ENCODE measurements at regions of chr4 and their contacts with region 1.

Region 1: DNA sequence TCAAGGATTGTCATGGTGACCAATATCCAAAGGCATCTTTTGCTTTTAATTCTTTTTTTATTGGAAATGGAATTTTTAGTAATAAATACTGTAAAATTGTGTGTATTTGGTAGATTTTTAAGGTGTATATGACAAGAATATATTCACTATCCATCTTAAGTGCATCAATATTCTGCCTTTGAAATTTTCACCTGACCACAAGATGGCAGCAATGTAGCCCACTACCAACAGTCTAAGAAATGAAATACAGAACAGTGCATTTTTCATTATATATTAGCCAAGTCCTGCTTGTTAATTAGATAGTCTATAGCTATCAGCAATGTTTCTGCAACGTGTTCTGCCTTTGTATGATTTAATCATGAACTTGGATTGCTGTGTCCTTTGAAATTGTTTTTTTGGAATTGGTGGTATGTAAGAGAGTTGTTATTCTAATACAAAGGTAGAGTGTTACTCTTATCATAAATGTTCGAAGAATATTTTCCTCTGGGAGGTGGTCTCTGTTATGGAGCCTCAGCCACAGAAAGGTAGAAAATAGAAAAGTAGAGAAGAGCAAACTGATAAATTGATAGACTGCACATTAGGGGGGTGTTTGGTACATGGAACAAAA is 38.2 kb downstream of the HPGDS start:
- DNase-seq: no peak
- H3K4me3 ChIP-seq: no peak overlapping the region
- CTCF ChIP-seq: peak; percentile 52

Region 2: DNA sequence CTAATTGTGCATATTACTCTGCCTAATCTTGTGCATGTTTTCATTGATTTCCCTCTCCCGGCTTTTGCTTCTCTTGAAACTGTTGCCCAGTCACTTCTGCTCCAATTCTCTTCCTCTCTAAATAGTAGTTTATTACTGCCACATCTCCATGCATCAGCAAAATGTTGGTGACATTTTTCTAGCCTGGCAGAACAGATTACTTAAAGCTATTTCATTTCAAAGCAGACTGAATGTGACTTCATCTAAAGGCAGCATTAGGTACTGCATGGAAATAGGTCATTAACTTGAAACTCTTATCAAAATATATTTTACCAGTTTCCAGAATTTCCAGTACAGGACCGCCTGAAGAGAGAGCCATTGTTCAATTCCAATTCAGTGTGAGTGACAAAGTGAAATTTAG is 14.2 kb before region 1 on chr4:
- CTCF ChIA-PET with region 1: interaction called, 10 read pairs
- POLR2A ChIA-PET with region 1: no interaction called
- DNase-seq: no peak
- H3K4me3 ChIP-seq: no peak overlapping the region
- CTCF ChIP-seq: no peak

Region 3: GRCh38 chr4:94390804-94391410 is 86.4 kb after region 1 on chr4:
- CTCF ChIA-PET with region 1: interaction called, 54 read pairs
- POLR2A ChIA-PET with region 1: no interaction called
- DNase-seq: no peak
- H3K4me3 ChIP-seq: no peak overlapping the region
- CTCF ChIP-seq: peak; percentile 35

Region 4: DNA sequence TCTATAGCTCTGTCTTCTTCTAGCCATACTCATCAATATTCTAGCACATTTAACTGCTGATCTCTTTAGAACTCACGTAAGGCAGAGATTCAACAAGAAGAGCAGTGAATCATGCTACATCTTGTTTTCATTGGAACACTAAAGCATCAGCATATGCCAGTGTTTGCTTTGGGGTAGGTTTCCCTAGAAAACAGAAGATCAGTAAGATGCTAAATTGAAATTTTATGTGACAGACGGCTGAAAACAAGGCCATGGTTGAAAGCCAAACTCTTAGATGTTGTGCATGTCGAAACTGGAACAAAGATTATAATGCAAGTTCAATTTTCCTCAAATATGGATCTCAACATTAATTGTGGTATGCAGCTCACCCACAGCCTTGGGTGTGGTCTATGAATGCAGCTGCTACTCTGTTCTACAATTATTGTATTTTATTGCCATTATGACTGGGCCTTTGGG is 254.9 kb after region 1 on chr4:
- CTCF ChIA-PET with region 1: no interaction called
- POLR2A ChIA-PET with region 1: no interaction called
- DNase-seq: no peak
- H3K4me3 ChIP-seq: no peak overlapping the region
- CTCF ChIP-seq: no peak

Region 5: DNA sequence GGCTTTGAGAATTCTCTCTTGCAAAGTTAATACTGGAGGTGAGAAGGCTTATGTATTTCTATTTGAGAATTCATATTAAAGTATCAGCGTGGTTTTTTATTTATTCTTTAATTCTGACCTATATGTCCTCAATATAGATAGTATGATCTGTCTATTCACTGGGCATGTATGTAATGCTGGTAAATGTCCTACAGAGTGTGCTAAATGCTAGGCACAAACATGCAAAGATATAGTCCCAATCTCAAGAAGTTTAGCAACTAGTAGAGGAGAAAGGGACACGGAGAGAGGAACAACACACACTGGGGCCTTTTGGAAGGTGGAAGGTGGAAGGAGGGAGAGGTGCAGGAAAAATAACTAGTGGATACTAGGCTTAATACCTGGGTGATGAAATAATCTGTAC is 442.3 kb after region 1 on chr4:
- CTCF ChIA-PET with region 1: no interaction called
- POLR2A ChIA-PET with region 1: no interaction called
- DNase-seq: no peak
- H3K4me3 ChIP-seq: no peak overlapping the region
- CTCF ChIP-seq: no peak

Measured in AG04449 (cell line).